Activated CD8-positive, alpha-beta T cell treated with anti-CD3 and anti-CD28 coated beads for 36 hours (primary cell): ENCODE measurements at regions of chr22 and their contacts with region 1.

Region 1: DNA sequence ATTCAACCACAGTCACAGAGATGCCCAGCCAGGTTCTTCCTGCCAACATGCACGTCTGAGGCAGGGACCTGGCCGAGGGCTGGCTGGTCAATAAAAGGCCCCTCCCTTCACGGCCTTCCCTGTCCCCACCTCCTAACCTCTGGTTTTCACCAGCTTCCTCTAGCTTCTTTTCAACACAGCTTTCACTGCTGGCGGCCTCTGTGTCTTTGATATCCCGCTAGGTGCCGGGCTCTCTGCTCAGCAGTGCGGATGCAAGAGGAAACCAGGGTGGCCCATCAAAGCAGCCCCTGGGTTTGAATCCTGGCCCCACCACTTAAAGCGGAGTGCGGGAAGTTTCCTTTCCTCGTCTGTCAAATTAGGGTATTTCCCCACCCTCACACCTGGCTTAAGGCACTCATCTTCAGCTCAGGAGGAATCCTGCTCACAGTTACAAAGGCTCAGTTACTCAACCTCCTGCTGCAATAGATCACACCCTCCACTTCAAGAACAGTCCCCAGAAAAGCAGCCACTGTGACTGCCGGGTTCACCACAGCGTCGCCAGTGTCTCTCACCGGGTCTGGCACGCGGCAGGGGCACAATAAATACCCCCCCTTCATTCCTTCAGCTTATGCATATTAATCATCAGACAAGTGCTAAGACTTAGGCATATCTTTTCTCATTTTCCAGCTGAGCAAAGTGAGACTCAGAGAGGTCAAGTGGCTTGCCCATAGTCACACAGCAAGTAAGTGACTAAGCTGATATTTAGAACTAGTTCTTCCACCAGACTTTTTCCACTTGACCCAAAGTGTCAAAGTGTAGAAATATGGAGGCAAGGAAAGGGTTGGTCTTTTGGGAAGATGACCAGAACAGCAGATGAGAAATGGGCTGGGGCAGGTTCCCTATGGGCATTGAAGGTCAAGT is 45.7 kb downstream of the TXN2 start:
- DNase-seq: peak; percentile 80
- ATAC-seq: peak; percentile 84
- H3K4me3 Mint-ChIP-seq: peak overlapping the region; percentile 35
- H3K27ac Mint-ChIP-seq: peak overlapping the region; percentile 93
- H3K4me1 Mint-ChIP-seq: peaks cover 47% of the 10 kb centered on the region
- H3K27me3 Mint-ChIP-seq: no peaks in the 10 kb centered on the region
- CTCF ChIP-seq: no peak

Region 2: DNA sequence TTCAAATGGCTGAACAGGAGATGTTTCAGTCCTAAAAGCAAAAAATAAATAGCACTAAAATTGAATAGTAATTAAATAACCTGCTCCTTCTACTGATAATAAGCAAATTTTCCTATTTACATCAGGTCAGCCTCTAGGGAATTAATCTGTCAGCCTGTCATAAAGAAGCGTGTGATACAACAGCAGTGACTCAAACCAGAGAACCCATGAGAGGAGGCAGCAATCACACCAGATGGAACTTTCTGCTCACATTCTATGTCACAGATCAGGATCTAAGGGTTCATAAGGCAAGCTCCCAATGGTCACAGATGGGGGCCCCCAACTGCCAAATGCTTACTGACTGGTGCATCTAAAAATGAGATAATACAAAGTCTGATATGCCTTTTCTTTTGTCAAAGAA is 448.3 kb before region 1 on chr22:
- CTCF ChIA-PET with region 1: no interaction called
- POLR2A ChIA-PET with region 1: no interaction called
- intact Hi-C with region 1: no loop called
- DNase-seq: no peak
- ATAC-seq: no peak
- H3K4me3 Mint-ChIP-seq: no peak overlapping the region
- H3K27ac Mint-ChIP-seq: no peak overlapping the region
- H3K4me1 Mint-ChIP-seq: no peaks in the 10 kb centered on the region
- H3K27me3 Mint-ChIP-seq: peaks cover 9% of the 10 kb centered on the region
- CTCF ChIP-seq: no peak

Region 3: DNA sequence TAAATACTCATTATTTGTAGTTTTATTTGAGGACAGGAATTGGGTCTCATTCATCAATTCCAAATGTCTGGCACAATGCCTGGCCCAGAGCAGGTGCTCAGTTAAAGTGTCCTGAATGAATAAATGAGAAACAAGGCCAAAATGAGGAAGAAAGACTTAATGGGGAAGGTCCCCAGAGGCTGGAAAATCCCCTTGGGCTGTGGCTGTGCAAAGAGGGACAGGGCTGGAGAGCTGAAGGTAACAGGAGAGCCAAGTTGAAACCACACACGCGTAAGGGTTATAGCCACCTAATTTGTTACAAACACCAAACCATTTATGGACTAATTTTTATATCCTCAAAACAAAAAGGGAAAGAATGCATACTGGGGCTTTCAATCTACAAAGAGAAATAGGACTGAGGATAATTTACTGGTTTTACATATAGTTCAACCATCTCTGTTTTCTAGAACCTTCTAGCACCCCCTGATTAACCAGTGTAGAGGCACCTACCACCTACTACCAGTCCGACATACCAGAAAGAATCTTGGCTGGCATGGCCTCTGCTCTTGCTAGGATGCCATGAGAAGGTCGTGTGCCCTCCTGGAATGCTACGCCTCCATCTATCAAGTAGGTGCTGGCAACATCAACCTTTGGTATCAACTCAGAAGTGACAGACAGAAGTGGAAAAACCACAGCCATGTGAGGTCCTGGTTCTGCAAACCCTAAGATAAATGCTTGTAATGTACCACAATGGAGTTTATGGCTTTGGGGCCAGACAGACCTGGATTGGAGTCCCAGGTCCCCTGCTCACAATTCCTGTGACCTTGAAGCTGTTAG is 76.4 kb before region 1 on chr22:
- CTCF ChIA-PET with region 1: no interaction called
- POLR2A ChIA-PET with region 1: no interaction called
- intact Hi-C with region 1: loop called (anchors 2 kb)
- DNase-seq: no peak
- ATAC-seq: no peak
- H3K4me3 Mint-ChIP-seq: peak overlapping the region; percentile 51
- H3K27ac Mint-ChIP-seq: peak overlapping the region; percentile 91
- H3K4me1 Mint-ChIP-seq: peaks cover 94% of the 10 kb centered on the region
- H3K27me3 Mint-ChIP-seq: no peaks in the 10 kb centered on the region
- CTCF ChIP-seq: no peak

Region 4: DNA sequence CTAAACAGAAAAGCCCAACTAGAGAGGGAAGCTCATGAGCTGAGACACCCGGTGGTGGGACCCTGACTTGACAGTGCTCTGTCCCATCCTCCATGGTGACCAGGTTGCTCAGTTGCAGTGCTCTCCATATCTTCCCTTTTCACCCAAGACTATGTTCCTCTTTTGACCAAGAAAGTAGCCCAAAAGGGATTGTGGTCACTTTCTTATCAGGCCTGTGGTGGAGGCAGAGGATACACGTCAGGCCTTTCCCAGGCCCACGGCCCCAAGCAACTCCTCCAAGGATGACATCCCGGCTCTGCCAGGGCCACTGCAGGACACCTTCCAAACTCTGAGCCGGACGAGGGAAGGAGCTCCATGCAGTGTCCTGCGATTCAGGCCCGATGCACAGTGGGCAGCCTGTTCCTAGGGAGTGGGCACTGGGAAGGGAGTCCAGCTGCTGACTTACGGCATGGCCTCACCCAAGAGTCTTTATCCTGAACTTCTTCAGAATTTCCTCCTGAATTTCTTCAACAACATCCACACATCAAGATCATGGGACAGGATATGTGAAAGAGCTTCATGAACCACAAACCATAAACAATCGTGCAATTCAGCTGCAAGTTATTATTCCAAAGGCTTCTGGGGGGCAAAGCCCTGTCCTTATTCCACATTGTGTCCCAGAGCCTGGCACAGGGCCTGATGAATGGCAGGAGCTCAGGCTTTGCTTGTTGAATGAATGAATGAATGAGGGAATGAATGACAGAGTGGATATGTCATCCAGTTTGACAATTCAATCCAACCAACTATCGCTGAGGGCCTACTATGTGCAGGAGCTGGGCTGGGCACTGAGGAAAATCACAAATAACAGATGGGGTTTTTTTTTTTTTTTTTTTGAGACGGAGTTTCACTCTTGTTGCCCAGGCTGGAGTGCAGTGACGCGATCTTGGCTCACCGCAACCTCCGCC is 12.0 kb before region 1 on chr22:
- CTCF ChIA-PET with region 1: no interaction called
- POLR2A ChIA-PET with region 1: interaction called, 10 read pairs
- intact Hi-C with region 1: no loop called
- DNase-seq: no peak
- ATAC-seq: no peak
- H3K4me3 Mint-ChIP-seq: no peak overlapping the region
- H3K27ac Mint-ChIP-seq: no peak overlapping the region
- H3K4me1 Mint-ChIP-seq: peaks cover 36% of the 10 kb centered on the region
- H3K27me3 Mint-ChIP-seq: no peaks in the 10 kb centered on the region
- CTCF ChIP-seq: no peak

Region 5: DNA sequence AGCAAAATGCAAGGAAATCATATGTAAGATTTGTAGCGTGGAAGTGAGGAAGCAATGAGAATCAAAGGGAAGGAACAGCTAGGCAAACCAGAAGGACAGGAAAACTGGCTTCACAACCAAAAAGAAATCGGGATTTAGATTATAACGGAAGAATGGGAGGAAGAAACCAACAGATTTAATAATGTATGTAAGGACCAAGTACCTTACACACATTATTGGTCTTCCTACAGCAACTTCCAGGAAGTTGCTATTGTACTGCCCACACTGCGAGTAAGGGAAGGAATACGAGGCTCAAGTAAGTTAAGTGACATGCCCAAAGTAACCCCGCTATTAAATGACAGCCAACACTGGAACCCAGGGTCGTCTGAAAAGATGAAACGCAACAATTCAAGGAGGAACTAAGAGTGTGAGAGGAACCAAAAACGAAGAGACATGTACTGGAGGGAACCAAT is 45.2 kb after region 1 on chr22:
- CTCF ChIA-PET with region 1: no interaction called
- POLR2A ChIA-PET with region 1: no interaction called
- intact Hi-C with region 1: no loop called
- DNase-seq: no peak
- ATAC-seq: no peak
- H3K4me3 Mint-ChIP-seq: peak overlapping the region; percentile 99
- H3K27ac Mint-ChIP-seq: peak overlapping the region; percentile 97
- H3K4me1 Mint-ChIP-seq: peaks cover 18% of the 10 kb centered on the region
- H3K27me3 Mint-ChIP-seq: no peaks in the 10 kb centered on the region
- CTCF ChIP-seq: no peak